B cell (primary cell): ENCODE measurements at regions of chr3 and their contacts with region 1.

Region 1: GRCh38 chr3:71444028-71444860 is 139.3 kb downstream of the FOXP1 start:
- DNase-seq: peak; percentile 92
- ATAC-seq: peak; percentile 76
- H3K4me3 ChIP-seq: peak overlapping the region in 3 of 5 experiments; percentile 3 to 22 (median 6)
- H3K4me3 Mint-ChIP-seq: peak overlapping the region; percentile 70
- H3K27ac ChIP-seq: peak overlapping the region; percentile 90 to 92
- H3K27ac Mint-ChIP-seq: peak overlapping the region; percentile 96
- H3K4me1 ChIP-seq: peaks cover 83 to 85% of the 10 kb centered on the region in 2 donors
- H3K4me1 Mint-ChIP-seq: peaks cover 82% of the 10 kb centered on the region
- H3K27me3 ChIP-seq: no peaks in the 10 kb centered on the region
- H3K27me3 Mint-ChIP-seq: no peaks in the 10 kb centered on the region
- CTCF ChIP-seq: no peak

Region 2: GRCh38 chr3:71064288-71064955 is 379.8 kb before region 1 on chr3:
- CTCF ChIA-PET with region 1: no interaction called
- POLR2A ChIA-PET with region 1: no interaction called
- intact Hi-C with region 1: loop called (anchors 1 kb)
- DNase-seq: peak; percentile 88
- ATAC-seq: peak; percentile 45
- H3K4me3 ChIP-seq: peak overlapping the region; percentile 62 to 94 (median 76)
- H3K4me3 Mint-ChIP-seq: no peak overlapping the region
- H3K27ac ChIP-seq: peak overlapping the region; percentile 83 to 91
- H3K27ac Mint-ChIP-seq: no peak overlapping the region
- H3K4me1 ChIP-seq: peaks cover 56 to 76% of the 10 kb centered on the region in 2 donors
- H3K4me1 Mint-ChIP-seq: peaks cover 65% of the 10 kb centered on the region
- H3K27me3 ChIP-seq: no peaks in the 10 kb centered on the region
- H3K27me3 Mint-ChIP-seq: no peaks in the 10 kb centered on the region
- CTCF ChIP-seq: no peak

Region 3: DNA sequence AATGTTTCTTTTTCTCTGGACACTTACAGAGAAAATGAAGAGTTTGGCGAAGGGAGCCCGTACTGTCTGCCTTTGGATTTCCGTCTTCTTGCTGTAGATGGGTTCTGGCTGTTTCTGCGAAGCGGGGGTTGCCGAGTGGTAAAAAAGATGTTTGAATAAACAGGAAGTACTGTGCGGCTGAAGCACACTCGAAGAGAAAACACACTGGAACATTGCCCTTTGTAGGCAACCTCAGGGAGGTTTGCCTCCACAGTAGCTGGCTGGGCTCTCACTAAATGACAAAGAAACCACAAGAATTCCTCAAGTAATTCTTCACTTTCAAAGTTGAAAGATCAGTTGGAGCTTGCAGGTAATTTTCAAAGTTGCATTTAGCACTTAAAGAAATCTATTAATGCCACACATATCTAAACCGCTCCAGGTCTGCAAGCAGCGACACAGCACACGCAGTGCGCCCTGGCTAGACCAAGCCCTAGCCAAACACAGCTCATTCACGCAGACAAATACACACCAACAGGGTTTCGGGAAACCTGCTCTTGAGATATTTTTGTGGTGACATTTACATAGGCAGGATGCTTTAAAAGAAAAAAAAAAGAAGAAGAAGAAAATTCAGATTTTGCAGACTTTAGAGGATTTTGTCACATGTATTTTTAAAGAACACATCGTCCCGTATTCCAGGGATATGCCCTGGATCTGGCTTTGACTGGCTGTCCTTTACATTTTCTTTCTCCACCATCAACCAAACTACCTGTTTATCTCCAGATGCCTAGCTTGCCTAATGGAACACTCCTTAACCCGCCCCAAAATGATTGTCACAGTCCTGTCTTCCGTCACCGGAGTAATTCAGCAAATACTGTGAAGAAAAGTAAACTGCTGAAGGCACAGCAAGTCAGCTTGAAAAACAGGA is 313.5 kb before region 1 on chr3:
- CTCF ChIA-PET with region 1: interaction called, 3 read pairs
- POLR2A ChIA-PET with region 1: no interaction called
- intact Hi-C with region 1: loop called (anchors 5 kb)
- DNase-seq: peak; percentile 81
- ATAC-seq: peak; percentile 76
- H3K4me3 ChIP-seq: peak overlapping the region; percentile 53 to 91 (median 71)
- H3K4me3 Mint-ChIP-seq: peak overlapping the region; percentile 93
- H3K27ac ChIP-seq: peak overlapping the region; percentile 72 to 91
- H3K27ac Mint-ChIP-seq: peak overlapping the region; percentile 94
- H3K4me1 ChIP-seq: peaks cover 51 to 64% of the 10 kb centered on the region in 2 donors
- H3K4me1 Mint-ChIP-seq: peaks cover 68% of the 10 kb centered on the region
- H3K27me3 ChIP-seq: no peaks in the 10 kb centered on the region
- H3K27me3 Mint-ChIP-seq: no peaks in the 10 kb centered on the region
- CTCF ChIP-seq: no peak

Region 4: DNA sequence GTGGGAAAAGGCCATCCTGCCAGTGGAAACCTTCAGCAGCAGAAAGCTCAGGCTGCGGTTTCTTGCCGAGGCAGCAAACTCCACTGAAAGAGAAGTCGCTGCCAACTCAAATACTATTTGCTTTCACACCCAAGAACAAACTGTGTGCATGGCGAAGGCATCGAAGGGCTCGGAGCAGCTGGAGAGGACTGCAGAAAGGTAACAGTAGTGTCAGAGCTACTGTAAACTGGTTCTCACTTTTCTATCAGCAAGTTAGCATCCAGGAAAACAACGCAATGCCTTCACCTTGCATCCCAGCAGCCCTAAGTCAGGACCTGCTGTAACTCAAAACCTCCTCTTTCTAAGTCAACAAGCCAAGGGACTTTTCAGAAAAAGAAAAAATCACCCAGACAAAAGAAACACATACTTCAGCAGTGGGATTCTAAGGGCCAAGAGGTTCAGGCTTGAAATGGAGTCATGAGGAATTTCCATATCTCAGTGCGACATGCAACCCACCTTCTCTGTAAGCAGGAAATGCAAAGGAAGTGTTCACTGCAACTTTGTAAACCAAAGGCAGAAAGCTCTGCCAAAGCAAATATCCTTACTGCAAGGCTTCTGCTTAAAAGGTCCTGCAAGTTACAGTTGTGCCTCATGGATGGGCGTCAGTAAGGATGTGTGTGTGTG is 54.2 kb before region 1 on chr3:
- CTCF ChIA-PET with region 1: interaction called, 5 read pairs
- POLR2A ChIA-PET with region 1: interaction called, 8 read pairs
- intact Hi-C with region 1: loop called (anchors 2 kb)
- DNase-seq: peak; percentile 57
- ATAC-seq: peak; percentile 11
- H3K4me3 ChIP-seq: peak overlapping the region; percentile 27 to 40 (median 33)
- H3K4me3 Mint-ChIP-seq: peak overlapping the region; percentile 84
- H3K27ac ChIP-seq: peak overlapping the region; percentile 95 to 99
- H3K27ac Mint-ChIP-seq: peak overlapping the region; percentile 98
- H3K4me1 ChIP-seq: peaks cover 84 to 90% of the 10 kb centered on the region in 2 donors
- H3K4me1 Mint-ChIP-seq: peaks cover 70% of the 10 kb centered on the region
- H3K27me3 ChIP-seq: no peaks in the 10 kb centered on the region
- H3K27me3 Mint-ChIP-seq: no peaks in the 10 kb centered on the region
- CTCF ChIP-seq: no peak

Region 5: DNA sequence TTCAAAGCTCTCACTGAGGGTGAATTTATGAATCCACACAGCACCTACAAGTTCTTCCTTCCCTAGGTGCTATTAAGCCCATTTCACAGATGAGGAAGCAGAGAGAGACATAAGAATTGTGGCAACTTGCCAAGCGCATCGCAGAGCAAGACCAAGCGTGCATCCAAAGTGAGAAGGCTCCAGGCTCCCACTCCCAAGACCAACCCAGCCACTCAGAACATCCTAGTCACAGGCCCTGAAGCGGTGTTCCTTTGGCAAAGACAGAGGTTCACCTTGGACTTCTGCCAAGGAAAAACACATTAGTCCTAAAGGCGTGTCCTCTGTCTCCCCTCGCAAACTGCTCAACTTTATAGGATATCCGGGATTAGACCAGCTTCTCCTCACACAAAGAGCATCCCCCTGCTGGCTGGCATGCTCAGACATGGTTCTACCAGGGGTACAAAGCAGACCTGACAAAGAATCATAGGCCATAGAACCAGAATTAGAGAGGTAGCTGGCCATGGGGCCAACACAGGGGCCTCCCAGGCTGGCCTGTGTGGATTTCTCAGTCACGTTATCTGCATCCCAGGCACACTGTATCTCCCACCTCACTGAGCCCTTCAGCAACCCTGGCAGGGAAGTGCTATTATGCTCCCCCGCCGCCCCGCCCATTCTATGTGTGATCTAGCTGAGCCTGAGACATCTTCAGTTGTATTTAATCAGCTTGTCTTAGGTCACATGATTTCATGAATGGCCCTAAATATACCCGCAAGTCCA is 20.9 kb before region 1 on chr3:
- CTCF ChIA-PET with region 1: interaction called, 8 read pairs
- POLR2A ChIA-PET with region 1: interaction called, 16 read pairs
- intact Hi-C with region 1: loop called (anchors 1 kb)
- DNase-seq: no peak
- ATAC-seq: no peak
- H3K4me3 ChIP-seq: no peak overlapping the region
- H3K4me3 Mint-ChIP-seq: peak overlapping the region; percentile 81
- H3K27ac ChIP-seq: peak overlapping the region; percentile 98
- H3K27ac Mint-ChIP-seq: peak overlapping the region; percentile 99
- H3K4me1 ChIP-seq: peaks cover 79 to 82% of the 10 kb centered on the region in 2 donors
- H3K4me1 Mint-ChIP-seq: peaks cover 84% of the 10 kb centered on the region
- H3K27me3 ChIP-seq: no peaks in the 10 kb centered on the region
- H3K27me3 Mint-ChIP-seq: no peaks in the 10 kb centered on the region
- CTCF ChIP-seq: no peak

Region 6: DNA sequence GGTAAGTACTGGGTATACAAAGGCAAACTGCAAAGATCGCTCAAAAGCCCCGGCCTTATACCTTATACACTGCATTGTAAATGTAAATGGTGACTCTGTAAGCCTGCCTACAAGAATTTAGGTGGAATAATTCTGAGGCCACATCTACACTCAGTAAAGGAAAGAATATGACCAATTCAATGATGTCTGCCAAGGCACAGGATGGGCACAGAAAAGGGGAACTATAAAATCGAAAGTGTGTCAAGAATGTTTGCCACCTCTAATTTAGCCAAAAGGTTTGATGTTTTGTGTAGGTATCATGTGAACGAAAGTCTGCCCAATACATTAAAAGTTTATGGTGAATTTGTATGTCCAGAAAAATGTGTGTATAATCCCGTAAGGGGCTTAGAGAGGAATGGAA is 43.2 kb after region 1 on chr3:
- CTCF ChIA-PET with region 1: interaction called, 3 read pairs
- POLR2A ChIA-PET with region 1: interaction called, 5 read pairs
- intact Hi-C with region 1: loop called (anchors 5 kb)
- DNase-seq: peak; percentile 64
- ATAC-seq: peak; percentile 88
- H3K4me3 ChIP-seq: no peak overlapping the region
- H3K4me3 Mint-ChIP-seq: peak overlapping the region; percentile 62
- H3K27ac ChIP-seq: peak overlapping the region; percentile 19 to 69
- H3K27ac Mint-ChIP-seq: peak overlapping the region; percentile 50
- H3K4me1 ChIP-seq: peaks cover 19 to 45% of the 10 kb centered on the region in 2 donors
- H3K4me1 Mint-ChIP-seq: peaks cover 55% of the 10 kb centered on the region
- H3K27me3 ChIP-seq: no peaks in the 10 kb centered on the region
- H3K27me3 Mint-ChIP-seq: no peaks in the 10 kb centered on the region
- CTCF ChIP-seq: no peak

Region 7: GRCh38 chr3:71583566-71584449 is 139.6 kb after region 1 on chr3 and contains the start of gene FOXP1:
- CTCF ChIA-PET with region 1: interaction called, 11 read pairs
- POLR2A ChIA-PET with region 1: interaction called, 22 read pairs
- intact Hi-C with region 1: loop called (anchors 2 kb)
- DNase-seq: peak; percentile 90
- ATAC-seq: peak; percentile 26
- H3K4me3 ChIP-seq: peak within 1 kb of the TSS; percentile 80 to 97 (median 92)
- H3K4me3 Mint-ChIP-seq: peak within 1 kb of the TSS; percentile 96
- H3K27ac ChIP-seq: peak within 1 kb of the TSS; percentile 90 to 97
- H3K27ac Mint-ChIP-seq: peak within 1 kb of the TSS; percentile 97
- H3K4me1 ChIP-seq: peaks cover 19 to 42% of the 10 kb centered on the region in 2 donors
- H3K4me1 Mint-ChIP-seq: peaks cover 44% of the 10 kb centered on the region
- H3K27me3 ChIP-seq: peaks cover 0 to 9% (median 4%) of the 10 kb centered on the region in 4 experiments
- H3K27me3 Mint-ChIP-seq: peaks cover 3% of the 10 kb centered on the region
- CTCF ChIP-seq: no peak
- total RNA-seq, gene FOXP1: 508 and 530 TPM in 2 replicates